Calu3 (cell line): ENCODE measurements at regions of chr20 and their contacts with region 1.

Region 1: DNA sequence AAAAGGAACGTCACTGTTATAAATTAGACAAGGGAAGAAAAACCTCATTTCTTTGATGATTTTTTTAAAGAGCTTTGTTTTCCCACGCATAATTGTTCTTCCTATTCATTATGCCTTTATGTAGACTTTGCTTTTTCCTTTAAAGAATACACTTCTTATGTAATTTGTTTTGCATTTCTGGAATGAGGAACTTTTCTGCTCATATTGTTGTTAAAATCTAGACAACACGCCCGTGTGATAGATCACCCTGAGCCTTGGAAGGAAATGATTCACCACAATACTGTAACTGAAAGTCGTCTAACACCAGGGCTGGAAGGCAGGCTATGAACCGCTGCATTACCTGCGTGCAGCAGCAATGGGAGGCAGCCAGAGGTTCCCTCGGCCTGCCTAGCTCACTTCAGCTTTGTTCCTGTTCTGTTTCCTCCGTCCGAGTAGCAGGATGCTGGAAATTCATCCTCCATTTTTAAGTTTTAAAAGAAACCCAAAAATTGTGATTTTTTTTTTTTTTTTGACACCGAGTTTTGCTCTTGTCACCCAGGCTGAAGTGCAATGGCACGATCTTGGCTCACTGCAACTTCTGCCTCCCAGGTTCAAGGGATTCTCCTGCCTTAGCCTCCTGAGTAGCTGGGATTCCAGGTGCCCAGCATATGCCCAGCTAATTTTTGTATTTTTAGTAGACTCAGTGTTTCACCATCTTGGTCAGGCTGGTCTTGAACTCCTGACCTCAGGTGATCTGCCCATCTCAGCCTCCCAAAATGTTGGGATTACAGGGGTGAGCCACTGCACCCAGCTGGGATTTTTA is 49.6 kb upstream of the ZNF217 start:
- DNase-seq: peak; percentile 75
- H3K4me3 Mint-ChIP-seq: peak overlapping the region; percentile 50
- H3K27ac Mint-ChIP-seq: peak overlapping the region; percentile 89
- H3K4me1 Mint-ChIP-seq: peaks cover 9% of the 10 kb centered on the region
- H3K27me3 Mint-ChIP-seq: no peaks in the 10 kb centered on the region
- CTCF ChIP-seq: no peak

Region 2: GRCh38 chr20:53594068-53595017 is 48.9 kb before region 1 on chr20:
- CTCF ChIA-PET with region 1: interaction called, 10 read pairs
- intact Hi-C with region 1: no loop called
- DNase-seq: peak; percentile 100
- H3K4me3 Mint-ChIP-seq: peak overlapping the region; percentile 69
- H3K27ac Mint-ChIP-seq: peak overlapping the region; percentile 86
- H3K4me1 Mint-ChIP-seq: peaks cover 65% of the 10 kb centered on the region
- H3K27me3 Mint-ChIP-seq: no peaks in the 10 kb centered on the region
- CTCF ChIP-seq: peak; percentile 53

Region 3: GRCh38 chr20:53623454-53624211 is 19.6 kb before region 1 on chr20:
- CTCF ChIA-PET with region 1: interaction called, 18 read pairs
- intact Hi-C with region 1: loop called (anchors 1 kb)
- DNase-seq: peak; percentile 71
- H3K4me3 Mint-ChIP-seq: peak overlapping the region; percentile 67
- H3K27ac Mint-ChIP-seq: peak overlapping the region; percentile 99
- H3K4me1 Mint-ChIP-seq: peaks cover 40% of the 10 kb centered on the region
- H3K27me3 Mint-ChIP-seq: no peaks in the 10 kb centered on the region
- CTCF ChIP-seq: no peak

Region 4: DNA sequence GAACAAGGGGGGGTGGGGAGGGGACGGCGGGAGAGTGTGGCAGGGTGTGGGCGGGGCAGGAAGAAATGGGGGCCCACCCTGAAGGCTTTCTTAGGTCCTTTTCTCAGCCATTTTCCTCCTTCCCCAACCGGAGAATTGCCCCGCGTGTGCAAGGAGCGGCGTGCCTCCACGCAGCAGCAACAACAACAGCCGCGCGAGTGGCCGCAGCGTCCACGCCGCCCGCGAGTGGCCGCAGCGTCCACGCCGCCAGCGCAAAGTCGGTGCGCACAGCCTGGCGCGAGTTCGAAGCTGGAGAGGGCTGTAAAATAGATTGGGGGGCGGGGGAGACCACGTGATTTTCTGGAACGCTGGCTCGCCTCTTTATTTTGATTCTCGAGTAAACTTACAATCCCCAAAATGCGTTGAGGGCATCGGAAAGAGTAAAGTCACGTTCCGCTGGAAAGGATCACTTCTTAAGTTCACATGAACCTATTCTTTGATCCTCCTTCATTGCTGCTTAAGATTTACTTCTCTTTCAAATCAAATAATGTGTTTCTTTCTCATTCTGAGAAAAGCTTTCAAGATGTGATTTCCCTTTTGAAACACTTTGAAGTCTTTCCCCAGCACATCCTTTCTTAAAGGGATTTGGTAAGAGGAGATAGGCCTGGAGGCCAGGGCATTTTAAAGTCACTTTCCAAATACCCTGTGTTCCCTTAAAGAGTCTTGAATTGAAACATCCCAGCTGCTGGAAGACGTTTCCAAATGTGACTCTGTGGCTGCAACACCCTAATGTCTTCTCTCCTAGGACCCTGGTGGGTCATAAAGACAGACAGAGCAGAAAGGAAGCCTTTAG is 17.1 kb after region 1 on chr20:
- CTCF ChIA-PET with region 1: interaction called, 10 read pairs
- intact Hi-C with region 1: loop called (anchors 1 kb)
- DNase-seq: no peak
- H3K4me3 Mint-ChIP-seq: peak overlapping the region; percentile 64
- H3K27ac Mint-ChIP-seq: no peak overlapping the region
- H3K4me1 Mint-ChIP-seq: peaks cover 34% of the 10 kb centered on the region
- H3K27me3 Mint-ChIP-seq: no peaks in the 10 kb centered on the region
- CTCF ChIP-seq: no peak

Region 5: DNA sequence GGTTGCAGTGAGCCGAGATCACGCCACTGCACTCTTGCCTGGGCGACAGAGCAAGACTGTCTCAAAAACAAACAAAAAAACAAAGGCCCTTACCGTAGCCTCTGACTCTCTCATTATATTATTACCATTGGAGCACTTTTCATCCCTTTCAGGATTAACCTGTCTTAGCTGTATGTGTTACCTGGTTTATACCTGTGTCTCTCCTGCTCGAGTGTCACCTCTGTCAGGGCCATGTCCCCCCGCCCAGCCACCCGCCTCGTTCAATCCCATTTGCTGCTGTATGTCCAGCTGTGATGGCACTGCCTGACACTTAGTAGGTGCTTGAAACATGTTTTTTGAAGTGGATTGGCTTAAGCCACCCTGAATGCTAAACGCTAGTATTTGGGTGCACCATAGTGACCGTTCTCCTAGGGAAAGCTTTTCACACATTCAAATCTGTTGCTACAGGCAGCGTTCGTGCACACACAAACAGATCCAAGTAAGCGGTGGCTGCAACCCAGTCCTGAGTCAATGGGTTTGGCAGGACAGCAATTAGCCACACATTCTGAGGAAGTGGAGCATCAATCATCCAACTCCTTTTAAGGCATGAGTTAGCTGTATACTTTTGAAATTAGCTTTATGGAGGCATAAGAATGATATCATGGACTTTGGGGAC is 49.3 kb after region 1 on chr20:
- CTCF ChIA-PET with region 1: no interaction called
- intact Hi-C with region 1: loop called (anchors 1 kb)
- DNase-seq: no peak
- H3K4me3 Mint-ChIP-seq: no peak overlapping the region
- H3K27ac Mint-ChIP-seq: no peak overlapping the region
- H3K4me1 Mint-ChIP-seq: peaks cover 17% of the 10 kb centered on the region
- H3K27me3 Mint-ChIP-seq: no peaks in the 10 kb centered on the region
- CTCF ChIP-seq: no peak

Region 6: GRCh38 chr20:53786445-53787267 is 143.4 kb after region 1 on chr20:
- CTCF ChIA-PET with region 1: no interaction called
- intact Hi-C with region 1: loop called (anchors 2 kb)
- DNase-seq: peak; percentile 37
- H3K4me3 Mint-ChIP-seq: peak overlapping the region; percentile 51
- H3K27ac Mint-ChIP-seq: peak overlapping the region; percentile 78
- H3K4me1 Mint-ChIP-seq: peaks cover 42% of the 10 kb centered on the region
- H3K27me3 Mint-ChIP-seq: no peaks in the 10 kb centered on the region
- CTCF ChIP-seq: no peak

Region 7: DNA sequence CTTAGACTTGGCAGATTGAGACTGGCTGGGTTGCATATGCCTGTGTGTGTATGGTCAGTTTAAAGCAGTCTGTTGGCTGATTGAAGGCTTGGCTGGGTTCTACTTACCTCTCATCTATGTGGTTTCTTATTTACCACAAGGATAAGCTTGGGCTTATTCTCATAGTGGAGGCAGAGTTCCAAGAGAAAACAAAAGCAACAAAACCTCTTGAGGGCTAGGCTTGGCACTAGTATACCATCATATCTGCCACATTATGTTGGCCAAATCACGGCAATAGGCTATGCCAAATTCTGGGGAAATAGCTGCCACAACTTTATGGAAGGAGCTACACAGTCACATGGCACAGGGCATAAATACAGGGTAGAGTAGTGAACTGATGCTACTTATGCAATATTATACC is 1648.0 kb after region 1 on chr20:
- CTCF ChIA-PET with region 1: no interaction called
- intact Hi-C with region 1: no loop called
- DNase-seq: no peak
- H3K4me3 Mint-ChIP-seq: no peak overlapping the region
- H3K27ac Mint-ChIP-seq: no peak overlapping the region
- H3K4me1 Mint-ChIP-seq: no peaks in the 10 kb centered on the region
- H3K27me3 Mint-ChIP-seq: no peaks in the 10 kb centered on the region
- CTCF ChIP-seq: no peak